Activated naive CD4-positive, alpha-beta T cell treated with anti-CD3 and anti-CD28 coated beads for 36 hours (primary cell): ENCODE measurements at regions of chr14 and their contacts with region 1.

Region 1: GRCh38 chr14:51780006-51780692 is 80.3 kb upstream of the GNG2 start:
- DNase-seq: peak; percentile 88
- H3K4me3 Mint-ChIP-seq: peak overlapping the region; percentile 0
- H3K27ac Mint-ChIP-seq: no peak overlapping the region
- H3K4me1 Mint-ChIP-seq: peaks cover 42% of the 10 kb centered on the region
- H3K27me3 Mint-ChIP-seq: no peaks in the 10 kb centered on the region

Region 2: DNA sequence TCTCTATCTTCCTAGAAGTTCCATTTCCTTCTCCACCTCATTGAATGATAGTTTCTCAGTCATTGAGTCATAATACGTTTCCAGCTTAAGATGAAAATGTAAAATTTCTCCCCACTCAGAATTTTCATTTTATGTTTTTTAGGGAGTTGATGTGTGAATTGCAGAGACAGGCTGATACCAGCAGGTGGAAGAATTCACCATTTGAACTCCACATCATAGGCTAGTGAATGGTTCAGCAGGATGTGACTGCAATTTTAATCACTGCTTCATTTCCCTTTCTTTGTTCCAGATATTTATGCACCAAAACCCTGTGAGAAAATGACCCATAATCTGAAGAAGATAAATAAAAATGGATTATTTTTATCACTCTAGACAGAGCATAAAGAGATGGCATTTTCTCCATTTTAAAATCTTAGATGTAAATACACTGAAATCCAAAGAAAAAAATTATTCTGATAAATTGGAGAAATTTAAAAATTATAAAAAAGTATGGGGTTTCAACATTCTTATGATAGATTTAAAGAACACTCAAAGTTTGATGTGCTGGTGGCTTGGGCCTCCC is 825.3 kb before region 1 on chr14:
- CTCF ChIA-PET with region 1: no interaction called
- intact Hi-C with region 1: loop called (anchors 1 kb)
- DNase-seq: no peak
- H3K4me3 Mint-ChIP-seq: no peak overlapping the region
- H3K27ac Mint-ChIP-seq: no peak overlapping the region
- H3K4me1 Mint-ChIP-seq: peaks cover 6% of the 10 kb centered on the region
- H3K27me3 Mint-ChIP-seq: no peaks in the 10 kb centered on the region

Region 3: DNA sequence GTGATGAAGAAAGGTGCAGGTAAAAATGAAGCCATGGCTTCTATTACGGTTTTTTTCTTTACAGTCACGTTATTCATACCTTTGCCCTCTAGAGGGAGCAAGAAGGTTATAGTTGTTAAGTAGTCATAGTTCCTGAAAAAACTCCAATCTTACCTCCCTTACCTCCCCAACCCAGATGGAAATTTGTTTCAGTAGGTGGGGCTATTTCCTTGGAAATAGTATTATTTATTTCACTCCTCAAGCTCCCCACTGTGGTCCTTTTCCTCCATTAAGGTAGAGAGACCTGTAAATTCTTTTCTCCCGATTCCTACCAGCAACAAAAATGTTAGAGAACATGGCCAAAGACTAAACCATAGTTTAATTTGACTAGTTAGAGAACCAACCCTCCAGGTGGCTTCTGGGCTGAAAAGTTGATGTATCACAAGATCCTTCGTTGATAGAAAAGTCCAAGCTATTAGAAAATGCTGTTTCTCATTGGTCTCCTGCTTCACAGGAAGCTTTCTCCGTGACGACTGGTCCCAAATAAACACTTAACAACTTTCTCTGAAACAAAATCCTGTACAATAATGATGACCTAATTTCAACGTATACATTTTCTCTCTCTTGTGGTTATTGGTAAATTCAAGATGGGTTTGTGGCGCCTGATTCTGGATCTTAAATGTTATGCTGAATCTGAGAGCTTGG is 496.6 kb before region 1 on chr14:
- CTCF ChIA-PET with region 1: interaction called, 15 read pairs
- intact Hi-C with region 1: loop called (anchors 1 kb)
- DNase-seq: no peak
- H3K4me3 Mint-ChIP-seq: no peak overlapping the region
- H3K27ac Mint-ChIP-seq: no peak overlapping the region
- H3K4me1 Mint-ChIP-seq: no peaks in the 10 kb centered on the region
- H3K27me3 Mint-ChIP-seq: no peaks in the 10 kb centered on the region

Region 4: DNA sequence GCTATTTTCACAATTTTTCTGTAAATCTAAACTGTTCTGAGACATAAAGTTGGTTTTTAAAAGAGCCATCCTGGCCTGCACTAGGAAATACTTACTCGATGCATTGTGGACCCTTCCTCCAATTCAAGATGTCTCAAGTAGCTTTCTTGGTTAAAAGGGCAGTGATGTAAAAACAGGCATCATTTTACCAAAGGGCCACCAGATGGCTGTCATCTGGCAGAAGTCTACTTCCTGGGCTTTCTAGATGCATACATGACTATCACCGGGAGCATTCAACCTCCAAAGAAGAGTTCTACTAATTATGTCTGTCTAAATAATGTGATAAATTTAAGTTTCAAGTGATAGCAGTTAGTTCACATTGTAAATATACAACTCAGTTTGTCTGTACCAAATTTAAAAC is 225.2 kb before region 1 on chr14:
- CTCF ChIA-PET with region 1: no interaction called
- intact Hi-C with region 1: no loop called
- DNase-seq: no peak
- H3K4me3 Mint-ChIP-seq: no peak overlapping the region
- H3K27ac Mint-ChIP-seq: no peak overlapping the region
- H3K4me1 Mint-ChIP-seq: no peaks in the 10 kb centered on the region
- H3K27me3 Mint-ChIP-seq: peaks cover 2% of the 10 kb centered on the region

Region 5: GRCh38 chr14:51807356-51807755 is 27.2 kb after region 1 on chr14:
- CTCF ChIA-PET with region 1: interaction called, 11 read pairs
- intact Hi-C with region 1: no loop called
- DNase-seq: no peak
- H3K4me3 Mint-ChIP-seq: no peak overlapping the region
- H3K27ac Mint-ChIP-seq: no peak overlapping the region
- H3K4me1 Mint-ChIP-seq: no peaks in the 10 kb centered on the region
- H3K27me3 Mint-ChIP-seq: no peaks in the 10 kb centered on the region

Region 6: DNA sequence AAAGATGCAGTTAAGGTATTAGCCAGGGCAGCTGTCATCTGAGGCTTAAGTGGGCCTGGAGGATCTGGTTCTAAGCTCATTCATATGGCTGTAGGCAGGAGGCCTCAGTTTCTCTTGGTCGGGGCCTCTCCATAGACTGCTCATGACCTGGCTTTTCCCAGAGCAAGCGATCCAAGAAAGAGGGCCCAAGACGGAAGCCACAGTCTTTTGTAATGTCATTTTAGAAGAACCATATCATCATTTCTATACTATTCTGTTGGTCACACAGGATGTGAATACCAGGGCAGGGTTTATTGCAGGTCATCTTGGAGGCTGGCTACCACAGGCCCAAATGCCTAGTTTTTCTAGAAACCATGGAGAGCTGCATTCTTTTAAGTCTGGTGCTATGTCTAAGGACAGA is 127.9 kb after region 1 on chr14:
- CTCF ChIA-PET with region 1: no interaction called
- intact Hi-C with region 1: loop called (anchors 5 kb)
- DNase-seq: no peak
- H3K4me3 Mint-ChIP-seq: no peak overlapping the region
- H3K27ac Mint-ChIP-seq: no peak overlapping the region
- H3K4me1 Mint-ChIP-seq: peaks cover 67% of the 10 kb centered on the region
- H3K27me3 Mint-ChIP-seq: no peaks in the 10 kb centered on the region